ENCODE measurements at regions of chr16 and their contacts with region 1.

Region 1: DNA sequence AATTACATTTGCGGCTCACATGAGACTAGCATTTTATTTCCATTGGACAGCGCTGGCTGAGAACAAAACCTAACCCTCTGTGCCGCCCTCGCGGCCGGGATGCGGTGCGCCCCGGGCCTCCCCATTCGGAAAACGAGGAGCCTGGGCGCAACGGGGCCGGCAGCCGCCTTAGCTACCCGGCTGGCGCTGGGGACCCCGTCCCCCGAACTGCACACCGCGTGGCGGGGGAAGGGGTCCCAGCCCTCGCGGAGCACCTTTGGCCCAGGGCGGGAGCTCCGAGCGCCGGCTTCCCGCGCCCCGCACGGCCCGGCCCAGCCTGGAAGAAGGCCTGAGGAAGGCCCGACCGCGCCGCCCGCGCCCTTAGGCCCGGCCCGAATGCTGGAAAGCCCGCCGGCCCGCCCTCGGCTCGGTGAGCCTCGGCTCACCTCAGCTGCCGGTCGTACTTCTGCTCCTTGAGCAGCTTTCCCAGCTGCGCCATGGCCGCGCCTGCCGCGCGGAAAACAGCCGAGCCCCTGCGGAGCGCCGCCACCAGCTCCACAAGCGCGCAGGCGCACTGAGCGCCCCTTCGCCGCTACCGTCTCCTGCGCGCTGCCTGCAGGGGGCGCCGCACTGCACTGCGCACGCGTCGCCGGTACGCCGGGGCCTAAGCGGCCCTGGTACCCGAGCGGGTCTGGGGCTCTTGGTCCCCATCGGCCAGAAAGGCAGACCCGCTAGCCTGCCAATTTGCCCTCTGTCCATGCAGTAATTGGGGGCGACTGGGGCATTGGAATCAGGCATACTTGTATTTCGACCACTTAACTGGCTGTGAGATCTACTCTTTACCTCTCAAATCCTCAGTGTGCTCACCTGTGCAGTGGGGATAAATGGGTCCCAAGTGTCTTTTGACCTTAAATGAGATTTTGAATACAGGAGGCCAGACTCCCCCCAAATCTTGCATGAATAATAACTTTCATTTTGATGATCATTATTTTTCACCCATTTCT is at the start of gene NAE1:
- DNase-seq: peak; percentile 88
- ATAC-seq: peak; percentile 98
- H3K4me3 Mint-ChIP-seq: peak within 1 kb of the TSS; percentile 73
- H3K27ac Mint-ChIP-seq: peak within 1 kb of the TSS; percentile 78
- H3K4me1 Mint-ChIP-seq: peaks cover 32% of the 10 kb centered on the region
- H3K27me3 Mint-ChIP-seq: no peaks in the 10 kb centered on the region
- CTCF ChIP-seq: peak; percentile 98
- total RNA-seq, gene NAE1: 115 to 123 TPM

Region 2: DNA sequence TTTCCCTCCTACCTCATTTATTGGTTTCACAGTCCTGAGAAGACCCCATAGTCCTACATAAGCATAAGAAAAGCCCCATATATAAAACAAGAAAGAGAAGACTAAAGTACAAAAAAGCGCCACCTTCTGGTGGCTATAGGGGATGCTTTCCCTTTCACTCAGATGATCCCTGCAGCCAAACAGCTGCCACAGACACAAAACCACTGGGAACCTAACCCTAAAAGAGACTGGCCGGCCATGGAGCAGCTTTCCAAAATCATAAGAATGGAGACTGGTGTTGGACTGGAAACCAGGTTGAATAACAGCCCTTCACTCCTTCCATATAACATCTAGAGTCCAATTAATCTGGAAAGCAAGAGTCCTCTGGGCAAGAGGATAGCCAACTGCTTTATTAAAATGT is 90.7 kb before region 1 on chr16:
- CTCF ChIA-PET with region 1: interaction called, 12 read pairs
- POLR2A ChIA-PET with region 1: interaction called, 4 read pairs
- intact Hi-C with region 1: no loop called
- DNase-seq: peak; percentile 61
- ATAC-seq: peak; percentile 76
- H3K4me3 Mint-ChIP-seq: no peak overlapping the region
- H3K27ac Mint-ChIP-seq: peak overlapping the region; percentile 8
- H3K4me1 Mint-ChIP-seq: peaks cover 16% of the 10 kb centered on the region
- H3K27me3 Mint-ChIP-seq: no peaks in the 10 kb centered on the region
- CTCF ChIP-seq: peak; percentile 66

Region 3: GRCh38 chr16:66810391-66810790 is 20.3 kb before region 1 on chr16:
- CTCF ChIA-PET with region 1: interaction called, 31 read pairs
- POLR2A ChIA-PET with region 1: interaction called, 3 read pairs
- intact Hi-C with region 1: no loop called
- DNase-seq: no peak
- ATAC-seq: no peak
- H3K4me3 Mint-ChIP-seq: no peak overlapping the region
- H3K27ac Mint-ChIP-seq: no peak overlapping the region
- H3K4me1 Mint-ChIP-seq: no peaks in the 10 kb centered on the region
- H3K27me3 Mint-ChIP-seq: no peaks in the 10 kb centered on the region
- CTCF ChIP-seq: no peak

Region 4: DNA sequence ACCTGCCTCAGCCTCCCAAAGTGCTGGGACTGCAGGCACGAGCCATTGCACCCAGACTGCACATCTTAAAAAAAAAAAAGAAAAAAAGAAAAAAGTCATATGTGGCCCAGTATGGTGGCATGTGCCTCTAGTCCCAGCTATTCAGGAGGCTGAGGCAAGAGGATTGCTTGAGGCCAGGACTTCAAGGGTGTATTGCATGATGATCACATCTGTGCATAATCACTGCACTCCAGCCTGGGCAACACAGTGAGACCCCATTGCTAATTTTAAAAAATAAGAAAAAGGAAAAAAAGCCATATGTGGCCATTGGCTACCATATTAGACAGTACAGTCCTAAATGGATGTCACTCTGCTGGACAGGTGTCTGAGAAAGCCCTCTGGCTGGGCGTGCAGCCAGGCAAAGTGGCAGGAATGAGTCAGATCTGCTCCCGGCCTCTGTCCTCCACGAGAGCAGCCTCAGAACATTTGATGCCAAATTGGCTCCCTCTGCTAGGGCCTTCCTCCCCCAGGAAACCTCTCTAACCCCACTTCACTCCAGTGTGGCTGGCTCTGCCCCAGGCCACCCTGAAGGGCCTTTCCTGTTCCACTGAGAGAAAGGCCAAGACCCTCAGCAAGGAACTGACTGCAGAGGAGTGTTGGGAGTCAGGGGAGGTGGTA is 28.2 kb after region 1 on chr16:
- CTCF ChIA-PET with region 1: interaction called, 214 read pairs
- POLR2A ChIA-PET with region 1: interaction called, 3 read pairs
- intact Hi-C with region 1: no loop called
- DNase-seq: no peak
- ATAC-seq: no peak
- H3K4me3 Mint-ChIP-seq: no peak overlapping the region
- H3K27ac Mint-ChIP-seq: no peak overlapping the region
- H3K4me1 Mint-ChIP-seq: no peaks in the 10 kb centered on the region
- H3K27me3 Mint-ChIP-seq: no peaks in the 10 kb centered on the region
- CTCF ChIP-seq: no peak